Activated naive CD4-positive, alpha-beta T cell treated with anti-CD3 and anti-CD28 coated beads for 36 hours (primary cell): ENCODE measurements at regions of chr10 and their contacts with region 1.

Region 1: GRCh38 chr10:6518791-6519429 is 61.2 kb downstream of the PRKCQ start:
- DNase-seq: peak; percentile 49
- H3K4me3 Mint-ChIP-seq: peak overlapping the region; percentile 55
- H3K27ac Mint-ChIP-seq: peak overlapping the region; percentile 79
- H3K4me1 Mint-ChIP-seq: peaks cover 78% of the 10 kb centered on the region
- H3K27me3 Mint-ChIP-seq: no peaks in the 10 kb centered on the region

Region 2: GRCh38 chr10:6491841-6492609 is 26.9 kb before region 1 on chr10:
- CTCF ChIA-PET with region 1: interaction called, 3 read pairs
- intact Hi-C with region 1: loop called (anchors 1 kb)
- DNase-seq: peak; percentile 59
- H3K4me3 Mint-ChIP-seq: peak overlapping the region; percentile 68
- H3K27ac Mint-ChIP-seq: peak overlapping the region; percentile 91
- H3K4me1 Mint-ChIP-seq: peaks cover 31% of the 10 kb centered on the region
- H3K27me3 Mint-ChIP-seq: no peaks in the 10 kb centered on the region

Region 3: DNA sequence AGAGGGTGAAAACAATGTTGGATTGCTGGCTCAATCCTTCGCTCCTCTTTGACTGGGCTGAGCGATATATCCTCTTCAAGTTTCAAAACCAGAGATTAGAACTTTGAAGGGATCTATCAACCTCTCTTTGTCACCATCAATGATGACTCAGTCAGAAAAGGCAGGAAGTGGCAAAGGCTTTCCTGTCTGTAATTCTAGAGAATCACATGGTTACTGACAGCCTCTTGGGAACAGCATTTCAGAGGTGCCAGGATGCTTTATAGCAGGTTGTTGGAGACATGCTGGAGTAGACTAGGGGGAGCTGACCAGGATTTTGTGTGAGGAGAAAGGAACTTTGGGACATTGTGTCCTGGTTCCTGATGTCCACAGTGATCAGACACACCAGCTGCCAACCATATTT is 20.1 kb before region 1 on chr10:
- CTCF ChIA-PET with region 1: interaction called, 3 read pairs
- intact Hi-C with region 1: loop called (anchors 1 kb)
- DNase-seq: peak; percentile 67
- H3K4me3 Mint-ChIP-seq: peak overlapping the region; percentile 20
- H3K27ac Mint-ChIP-seq: peak overlapping the region; percentile 85
- H3K4me1 Mint-ChIP-seq: peaks cover 47% of the 10 kb centered on the region
- H3K27me3 Mint-ChIP-seq: no peaks in the 10 kb centered on the region

Region 4: GRCh38 chr10:6530211-6530840 is 11.4 kb after region 1 on chr10:
- CTCF ChIA-PET with region 1: interaction called, 5 read pairs
- intact Hi-C with region 1: loop called (anchors 1 kb)
- DNase-seq: peak; percentile 92
- H3K4me3 Mint-ChIP-seq: peak overlapping the region; percentile 78
- H3K27ac Mint-ChIP-seq: peak overlapping the region; percentile 90
- H3K4me1 Mint-ChIP-seq: peaks cover 80% of the 10 kb centered on the region
- H3K27me3 Mint-ChIP-seq: no peaks in the 10 kb centered on the region

Region 5: GRCh38 chr10:6574664-6575176 is 55.8 kb after region 1 on chr10:
- CTCF ChIA-PET with region 1: interaction called, 4 read pairs
- intact Hi-C with region 1: loop called (anchors 1 kb)
- DNase-seq: no peak
- H3K4me3 Mint-ChIP-seq: no peak overlapping the region
- H3K27ac Mint-ChIP-seq: no peak overlapping the region
- H3K4me1 Mint-ChIP-seq: peaks cover 72% of the 10 kb centered on the region
- H3K27me3 Mint-ChIP-seq: no peaks in the 10 kb centered on the region

Region 6: DNA sequence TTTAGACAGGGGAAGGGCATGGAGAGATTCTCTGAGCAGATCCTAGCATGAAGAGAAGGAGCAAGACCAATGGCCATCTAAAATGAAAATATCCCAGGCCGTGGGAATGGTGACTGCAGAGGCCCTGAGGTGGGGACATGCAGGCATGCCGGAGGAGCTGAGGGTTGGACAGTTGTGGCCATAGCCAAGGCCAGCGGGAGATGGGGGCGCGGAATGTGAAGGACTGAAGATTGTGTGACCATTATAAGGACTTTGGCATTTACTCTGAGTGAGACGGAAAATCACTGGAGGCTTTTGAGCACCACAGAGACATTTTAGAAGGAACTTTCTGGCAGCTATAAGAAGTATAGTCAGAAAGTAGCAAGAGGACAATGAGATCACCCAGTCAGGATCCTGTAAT is 550.8 kb after region 1 on chr10:
- CTCF ChIA-PET with region 1: no interaction called
- intact Hi-C with region 1: no loop called
- DNase-seq: no peak
- H3K4me3 Mint-ChIP-seq: no peak overlapping the region
- H3K27ac Mint-ChIP-seq: no peak overlapping the region
- H3K4me1 Mint-ChIP-seq: no peaks in the 10 kb centered on the region
- H3K27me3 Mint-ChIP-seq: no peaks in the 10 kb centered on the region